GM10248 (cell line): ENCODE measurements at regions of chr14 and their contacts with region 1.

Region 1: GRCh38 chr14:67599698-67600561 is at the start of gene PIGH:
- DNase-seq: peak; percentile 95
- CTCF ChIP-seq: peak; percentile 54

Region 2: GRCh38 chr14:67589204-67589770 is 10.6 kb before region 1 on chr14:
- CTCF ChIA-PET with region 1: interaction called, 46 read pairs
- POLR2A ChIA-PET with region 1: no interaction called
- DNase-seq: no peak
- CTCF ChIP-seq: no peak

Region 3: GRCh38 chr14:67610491-67610890 is 10.6 kb after region 1 on chr14:
- CTCF ChIA-PET with region 1: interaction called, 25 read pairs
- POLR2A ChIA-PET with region 1: interaction called, 3 read pairs
- DNase-seq: no peak
- CTCF ChIP-seq: no peak

Region 4: GRCh38 chr14:67784244-67784823 is 184.4 kb after region 1 on chr14:
- CTCF ChIA-PET with region 1: no interaction called
- POLR2A ChIA-PET with region 1: no interaction called
- DNase-seq: no peak
- CTCF ChIP-seq: no peak